Adrenal gland (tissue), 19 donors: ENCODE measurements at regions of chr3 and their contacts with region 1.

Region 1: GRCh38 chr3:51384726-51385473 is at the start of gene MANF:
- DNase-seq: peak; percentile 97 to 99 (median 98)
- H3K4me3 ChIP-seq: peak within 1 kb of the TSS; percentile 82 to 98 (median 88)
- H3K27ac ChIP-seq: peak within 1 kb of the TSS; percentile 26 to 95 (median 90)
- H3K4me1 ChIP-seq: peaks cover 10 to 37% of the 10 kb centered on the region in 2 donors
- H3K27me3 ChIP-seq: no peaks in the 10 kb centered on the region
- CTCF ChIP-seq: peak in 3 of 6 experiments; percentile 34 to 53 (median 47)
- POLR2A ChIP-seq: peak; percentile 87 to 95
- total RNA-seq, gene MANF: 16.1 to 281 (median 49.0) TPM

Region 2: GRCh38 chr3:51434746-51435327 is 49.9 kb after region 1 on chr3:
- intact Hi-C with region 1: loop called in 1 of 2 experiments (anchors 5 kb)
- DNase-seq: peak; percentile 37 to 76 (median 53)
- H3K4me3 ChIP-seq: no peak overlapping the region
- H3K27ac ChIP-seq: no peak overlapping the region
- H3K4me1 ChIP-seq: peaks cover 0 to 8% of the 10 kb centered on the region in 2 donors
- H3K27me3 ChIP-seq: no peaks in the 10 kb centered on the region
- CTCF ChIP-seq: peak; percentile 49 to 67 (median 56)
- POLR2A ChIP-seq: no peak

Region 3: GRCh38 chr3:51682079-51682478 is 297.2 kb after region 1 on chr3:
- intact Hi-C with region 1: loop called (anchors 10 kb)
- DNase-seq: peak; percentile 81 to 95 (median 87)
- H3K4me3 ChIP-seq: no peak overlapping the region
- H3K27ac ChIP-seq: peak overlapping the region in 3 of 5 donors; percentile 20 to 59 (median 26)
- H3K4me1 ChIP-seq: peaks cover 20 to 49% of the 10 kb centered on the region in 2 donors
- H3K27me3 ChIP-seq: no peaks in the 10 kb centered on the region
- CTCF ChIP-seq: peak; percentile 77 to 99 (median 96)
- POLR2A ChIP-seq: no peak